Left ventricle myocardium superior (tissue), 1 donor: ENCODE measurements at regions of chr10 and their contacts with region 1.

Region 1: GRCh38 chr10:104231784-104232612 is at the start of gene CFAP43:
- DNase-seq: peak; percentile 99
- ATAC-seq: peak; percentile 100
- total RNA-seq, gene CFAP43: not detected

Region 2: DNA sequence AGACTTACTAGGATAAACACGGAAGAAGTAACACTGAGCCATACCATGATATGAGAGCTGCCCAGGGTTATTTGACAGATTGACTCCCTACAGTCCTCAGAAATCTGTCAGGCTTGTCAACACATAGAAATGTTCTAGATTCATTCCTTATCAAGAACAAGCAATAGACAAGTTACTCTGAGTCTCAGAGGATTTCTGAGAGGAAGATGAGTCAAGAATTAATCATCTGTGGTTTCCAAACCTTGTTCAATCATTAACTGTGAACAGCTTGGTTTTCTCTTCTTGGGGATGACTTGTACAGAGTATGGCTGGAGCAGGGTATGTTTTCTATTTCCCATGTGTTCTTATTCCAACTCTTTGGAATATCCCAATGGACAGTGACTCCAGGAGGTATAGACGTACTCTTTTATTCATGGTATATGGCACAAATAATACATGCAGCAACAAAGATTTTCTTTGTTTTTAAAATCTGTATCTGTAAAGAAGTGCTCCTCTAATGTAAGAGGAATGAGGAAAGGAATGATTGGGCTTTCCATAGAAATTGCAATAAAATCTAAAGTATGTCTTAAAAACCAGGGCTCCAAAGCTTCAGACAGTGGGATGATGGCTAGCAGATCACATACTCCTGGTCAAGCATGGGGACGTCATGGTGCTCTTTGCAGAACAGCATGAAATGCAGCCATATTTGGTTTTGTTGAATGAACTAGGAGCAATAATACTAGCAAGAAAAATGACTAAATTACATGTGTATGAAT is 121.9 kb before region 1 on chr10:
- intact Hi-C with region 1: no loop called
- DNase-seq: no peak
- ATAC-seq: no peak

Region 3: DNA sequence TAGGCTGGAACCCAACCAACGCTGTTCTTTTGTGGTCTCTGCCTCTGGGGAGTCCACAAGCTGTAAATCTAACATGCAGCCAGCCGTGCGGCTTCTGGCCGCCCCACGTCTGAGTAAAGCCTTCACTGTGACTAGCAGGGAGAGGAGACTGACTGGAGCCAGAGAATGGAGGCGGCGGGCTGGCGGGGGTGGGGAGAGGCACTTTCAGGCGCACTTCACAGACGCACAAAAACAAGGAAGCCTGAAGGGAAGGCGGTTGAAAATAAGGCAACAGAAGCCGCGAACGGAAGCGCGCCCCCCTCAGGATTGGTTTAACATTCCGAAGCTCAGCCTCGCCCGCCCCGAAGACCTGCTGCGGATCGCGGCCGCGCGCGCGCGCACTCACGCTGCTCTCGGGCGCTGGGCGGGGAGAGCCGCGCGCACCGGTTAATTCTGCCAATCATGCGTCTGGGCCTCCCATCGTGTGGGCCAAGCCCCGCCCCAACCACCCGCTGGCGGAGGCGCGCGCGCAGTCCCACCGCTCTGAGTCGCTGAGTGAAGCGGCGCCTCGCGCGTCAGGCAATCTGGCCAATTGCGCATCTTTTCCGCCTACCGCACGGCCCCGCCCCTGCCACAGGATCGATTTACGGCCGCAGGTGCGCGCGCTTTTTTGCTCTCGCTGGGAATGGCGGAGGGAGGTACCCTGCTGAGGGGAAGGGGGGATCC is 110.3 kb before region 1 on chr10 and contains the start of gene SFR1:
- intact Hi-C with region 1: loop called (anchors 10 kb)
- DNase-seq: peak; percentile 100
- ATAC-seq: peak; percentile 97
- total RNA-seq, gene SFR1: 5.2 TPM

Region 4: GRCh38 chr10:104254493-104255310 is 22.7 kb after region 1 on chr10 and contains the start of gene GSTO1:
- intact Hi-C with region 1: no loop called
- DNase-seq: peak; percentile 90
- ATAC-seq: peak; percentile 93
- total RNA-seq, gene GSTO1: 163 TPM

Region 5: DNA sequence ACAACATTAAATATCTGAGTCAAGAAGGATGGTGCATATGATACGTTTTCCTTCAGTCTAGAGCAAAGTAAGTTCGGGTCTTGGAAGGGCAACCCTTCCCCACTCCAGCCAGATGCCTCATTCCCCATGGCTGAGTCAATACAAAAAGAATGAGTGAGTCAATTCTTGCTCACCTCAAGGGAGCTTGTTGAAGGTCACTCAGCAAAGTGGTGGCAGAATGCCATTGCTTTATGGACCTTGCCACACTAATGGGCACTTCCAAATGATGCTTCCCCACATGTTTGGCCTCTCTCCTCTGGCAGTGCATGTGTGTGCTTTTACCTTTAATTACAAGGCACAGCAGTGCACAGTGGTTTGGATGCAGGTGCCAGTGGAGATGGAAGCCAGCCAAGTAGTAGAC is 705.6 kb after region 1 on chr10:
- intact Hi-C with region 1: no loop called
- DNase-seq: no peak
- ATAC-seq: peak; percentile 15